Activated CD4-positive, alpha-beta T cell treated with anti-CD3 and anti-CD28 coated beads for 36 hours (primary cell): ENCODE measurements at regions of chr11 and their contacts with region 1.

Region 1: DNA sequence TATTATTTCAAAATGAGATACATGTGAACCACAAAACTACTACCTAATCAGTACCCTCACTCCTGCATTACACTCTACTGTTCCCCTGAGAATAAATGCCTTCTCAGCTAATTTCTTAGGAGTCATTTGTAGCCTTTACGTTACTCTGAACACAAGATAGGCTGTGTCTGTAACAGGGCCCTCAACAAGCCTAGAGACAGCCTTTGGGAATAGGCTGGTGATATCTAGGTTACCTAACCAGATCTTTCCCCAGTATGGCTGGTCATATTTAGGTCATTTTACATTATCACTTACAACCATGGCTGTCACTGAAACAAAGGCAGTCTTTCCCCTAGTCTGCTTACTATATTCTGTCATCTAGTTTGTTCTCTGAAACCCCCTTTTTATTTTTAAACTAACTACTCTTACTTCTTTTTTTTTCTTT is 14.2 kb downstream of the ATM start:
- DNase-seq: no peak
- ATAC-seq: peak; percentile 47
- H3K4me3 Mint-ChIP-seq: peak overlapping the region; percentile 57
- H3K27ac Mint-ChIP-seq: peak overlapping the region; percentile 83
- H3K4me1 Mint-ChIP-seq: peaks cover 77% of the 10 kb centered on the region
- H3K27me3 Mint-ChIP-seq: no peaks in the 10 kb centered on the region

Region 2: DNA sequence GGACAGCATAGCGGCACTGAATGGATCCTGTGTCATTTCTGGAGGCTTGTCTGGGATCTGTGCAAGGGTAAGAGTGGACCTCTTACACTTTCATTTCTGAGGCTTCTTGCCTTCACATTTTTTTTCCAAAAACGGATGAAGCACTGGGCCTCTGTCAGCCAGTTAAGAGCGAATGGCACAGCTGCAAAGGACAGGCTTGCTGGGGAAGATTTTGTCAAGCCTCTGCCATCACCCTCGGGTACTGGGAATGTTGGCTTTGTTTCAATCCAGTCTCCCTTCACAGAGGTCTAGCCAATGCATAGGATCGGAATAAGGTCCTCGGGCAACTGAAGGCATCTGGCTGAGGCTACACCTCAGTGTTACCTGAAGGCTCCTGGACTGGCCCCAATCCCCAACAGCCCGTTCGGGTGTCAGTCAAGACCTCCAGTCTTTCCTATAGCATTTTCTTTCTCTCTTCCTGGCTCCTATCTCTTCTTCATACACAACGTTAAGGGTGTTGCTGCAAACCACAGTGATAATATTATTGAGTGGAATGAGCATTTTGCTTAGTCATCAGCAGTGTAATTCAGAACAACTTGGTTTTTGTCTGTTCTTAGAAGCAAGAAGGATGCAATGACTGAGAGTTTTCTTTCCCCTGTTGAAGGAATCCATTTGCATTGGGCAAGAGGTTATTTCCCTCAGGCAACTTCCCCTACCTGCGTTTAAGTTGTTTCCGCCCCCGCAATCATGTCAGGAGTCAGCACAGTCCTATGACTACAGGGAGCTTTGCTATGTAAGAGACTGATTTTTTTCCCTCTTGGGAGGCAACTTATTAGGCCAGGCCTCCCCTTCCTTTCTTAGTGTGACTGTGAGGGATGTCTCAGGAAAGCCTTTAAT is 37.4 kb before region 1 on chr11:
- CTCF ChIA-PET with region 1: interaction called, 4 read pairs
- POLR2A ChIA-PET with region 1: interaction called, 6 read pairs
- intact Hi-C with region 1: loop called (anchors 1 kb)
- DNase-seq: peak; percentile 91
- ATAC-seq: peak; percentile 94
- H3K4me3 Mint-ChIP-seq: no peak overlapping the region
- H3K27ac Mint-ChIP-seq: peak overlapping the region; percentile 69
- H3K4me1 Mint-ChIP-seq: peaks cover 86% of the 10 kb centered on the region
- H3K27me3 Mint-ChIP-seq: no peaks in the 10 kb centered on the region

Region 3: DNA sequence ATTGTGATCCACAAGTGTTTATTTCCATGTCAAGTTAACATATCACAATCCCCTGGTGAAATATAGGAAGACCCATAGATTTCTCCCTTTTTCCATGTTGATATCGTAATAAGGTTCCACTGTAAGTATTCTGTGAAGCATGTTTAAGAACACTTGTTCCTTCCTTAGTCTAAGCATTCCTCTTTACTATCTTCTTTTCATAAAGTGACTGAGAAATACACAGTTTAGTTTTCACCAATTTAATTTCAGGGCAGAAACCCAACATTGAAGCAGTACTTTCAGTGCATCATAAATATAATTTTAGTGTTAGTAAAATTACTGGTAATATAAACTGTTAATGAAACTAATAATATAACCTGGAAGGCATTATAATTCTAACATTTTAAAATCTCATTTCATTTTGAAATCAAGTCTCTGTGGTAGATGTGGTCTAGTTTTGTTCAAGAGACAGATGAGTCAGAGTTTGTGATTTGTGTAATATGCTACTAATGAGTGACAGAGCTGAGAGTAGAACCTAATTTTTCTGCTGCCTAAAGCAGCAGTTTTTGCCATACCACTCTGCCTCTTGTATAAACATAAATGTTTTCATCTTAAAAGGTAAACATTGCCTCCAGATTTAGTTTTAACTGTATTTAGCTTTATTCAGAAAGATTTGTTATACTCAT is 65.2 kb after region 1 on chr11:
- CTCF ChIA-PET with region 1: interaction called, 3 read pairs
- POLR2A ChIA-PET with region 1: no interaction called
- intact Hi-C with region 1: loop called (anchors 1 kb)
- DNase-seq: no peak
- ATAC-seq: peak; percentile 94
- H3K4me3 Mint-ChIP-seq: no peak overlapping the region
- H3K27ac Mint-ChIP-seq: no peak overlapping the region
- H3K4me1 Mint-ChIP-seq: peaks cover 33% of the 10 kb centered on the region
- H3K27me3 Mint-ChIP-seq: no peaks in the 10 kb centered on the region

Region 4: GRCh38 chr11:108324587-108324986 is 87.5 kb after region 1 on chr11:
- CTCF ChIA-PET with region 1: no interaction called
- POLR2A ChIA-PET with region 1: no interaction called
- intact Hi-C with region 1: no loop called
- DNase-seq: no peak
- ATAC-seq: no peak
- H3K4me3 Mint-ChIP-seq: no peak overlapping the region
- H3K27ac Mint-ChIP-seq: no peak overlapping the region
- H3K4me1 Mint-ChIP-seq: peaks cover 14% of the 10 kb centered on the region
- H3K27me3 Mint-ChIP-seq: no peaks in the 10 kb centered on the region

Region 5: GRCh38 chr11:108788565-108789199 is 551.6 kb after region 1 on chr11:
- CTCF ChIA-PET with region 1: no interaction called
- POLR2A ChIA-PET with region 1: no interaction called
- intact Hi-C with region 1: no loop called
- DNase-seq: peak; percentile 8
- ATAC-seq: no peak
- H3K4me3 Mint-ChIP-seq: no peak overlapping the region
- H3K27ac Mint-ChIP-seq: no peak overlapping the region
- H3K4me1 Mint-ChIP-seq: peaks cover 54% of the 10 kb centered on the region
- H3K27me3 Mint-ChIP-seq: no peaks in the 10 kb centered on the region